WTC11 (cell line): ENCODE measurements at regions of chr12 and their contacts with region 1.

Region 1: DNA sequence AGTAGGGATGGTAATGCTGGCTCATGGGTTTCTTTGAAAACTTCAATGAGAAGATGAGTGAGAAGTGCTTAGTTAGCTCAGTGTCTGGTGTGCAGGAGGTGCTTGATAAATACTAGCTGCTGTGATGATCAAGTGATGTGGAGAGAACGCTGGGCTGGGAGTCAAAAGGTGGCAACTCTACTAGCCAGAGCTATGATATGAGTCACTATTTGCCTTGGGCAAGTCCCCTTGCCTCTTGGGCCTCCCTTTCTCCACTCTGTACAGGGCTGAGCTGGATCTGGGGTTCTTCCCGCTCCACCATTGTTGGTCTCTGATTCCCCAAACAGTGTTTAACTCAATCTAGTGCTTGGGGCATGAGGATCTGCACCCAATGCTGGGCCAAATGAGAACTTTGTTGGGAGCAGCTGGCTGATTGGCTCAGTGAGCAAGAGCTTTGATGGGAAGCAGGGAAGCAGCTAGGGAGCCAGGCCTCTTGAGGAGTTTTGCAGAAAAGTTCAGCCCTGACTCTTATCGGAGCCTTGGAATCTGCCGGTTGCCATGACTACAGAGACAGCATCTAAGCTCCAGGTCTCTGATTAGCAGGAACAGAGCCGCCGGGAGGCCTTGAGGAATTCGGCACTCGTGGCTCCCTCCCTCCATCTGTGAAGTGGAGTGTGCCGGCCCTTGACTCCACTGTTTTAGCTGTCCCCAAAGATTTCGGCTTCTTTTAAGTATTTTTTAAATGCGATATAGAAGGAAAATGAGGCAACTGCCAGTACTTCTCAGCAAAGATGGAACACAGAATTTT is 82.1 kb upstream of the HSPB8 start:
- DNase-seq: peak; percentile 59
- ATAC-seq: peak; percentile 92
- H3K4me3 Mint-ChIP-seq: no peak overlapping the region
- H3K27ac Mint-ChIP-seq: no peak overlapping the region
- H3K4me1 Mint-ChIP-seq: peaks cover 38% of the 10 kb centered on the region
- H3K27me3 Mint-ChIP-seq: peaks cover 3% of the 10 kb centered on the region
- CTCF ChIP-seq: no peak

Region 2: GRCh38 chr12:119082496-119082895 is 14.1 kb before region 1 on chr12:
- CTCF ChIA-PET with region 1: no interaction called
- POLR2A ChIA-PET with region 1: no interaction called
- DNase-seq: no peak
- ATAC-seq: peak; percentile 43; the same call in 1 of the 2 replicates
- H3K4me3 Mint-ChIP-seq: no peak overlapping the region
- H3K27ac Mint-ChIP-seq: no peak overlapping the region
- H3K4me1 Mint-ChIP-seq: peaks cover 35% of the 10 kb centered on the region
- H3K27me3 Mint-ChIP-seq: no peaks in the 10 kb centered on the region; the same call in 1 of the 2 replicates
- CTCF ChIP-seq: no peak

Region 3: DNA sequence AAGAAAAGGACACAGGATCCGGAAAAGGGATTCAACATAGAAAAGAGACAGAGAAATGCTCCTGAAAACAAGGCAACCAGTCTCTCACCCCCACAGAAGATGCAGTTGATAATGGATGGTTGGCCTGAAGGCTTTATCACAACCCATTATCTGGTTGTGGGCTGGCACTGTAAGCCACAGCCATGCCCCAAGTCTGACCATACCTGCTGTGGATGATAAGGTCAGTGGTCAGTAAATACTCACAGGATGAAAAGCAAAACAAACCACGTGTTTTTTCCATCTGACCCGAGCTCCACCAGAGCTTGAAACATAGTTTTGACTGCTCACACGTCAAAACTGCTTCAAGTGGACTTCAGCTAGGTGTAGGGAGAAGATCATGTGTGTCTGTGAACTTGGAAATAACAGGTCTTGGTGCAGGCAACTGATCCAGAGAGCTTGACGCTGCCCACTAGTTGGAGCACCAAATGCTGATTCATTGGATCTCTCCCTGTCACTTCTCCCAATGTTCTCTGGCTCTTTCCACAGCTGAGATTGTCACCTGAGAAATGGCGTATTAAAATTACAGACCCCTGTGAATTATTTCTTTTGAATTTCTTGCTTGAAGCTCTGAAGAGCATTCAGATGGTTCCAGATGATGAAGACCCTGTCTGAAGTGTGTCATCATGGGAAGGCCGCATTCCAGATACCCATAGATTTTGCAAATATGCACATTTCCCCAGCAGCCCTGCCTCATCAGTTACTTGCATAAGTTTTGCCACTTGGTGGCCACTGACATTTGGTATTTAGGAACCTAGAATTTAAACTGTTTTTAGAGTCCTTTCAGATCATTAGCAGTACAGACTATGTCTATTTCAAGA is 505.5 kb after region 1 on chr12:
- CTCF ChIA-PET with region 1: no interaction called
- POLR2A ChIA-PET with region 1: interaction called, 11 read pairs
- DNase-seq: no peak
- ATAC-seq: no peak
- H3K4me3 Mint-ChIP-seq: no peak overlapping the region
- H3K27ac Mint-ChIP-seq: no peak overlapping the region
- H3K4me1 Mint-ChIP-seq: no peaks in the 10 kb centered on the region
- H3K27me3 Mint-ChIP-seq: peaks cover 40% of the 10 kb centered on the region
- CTCF ChIP-seq: no peak